ENCODE measurements at regions of chr2 and their contacts with region 1.

Region 1: GRCh38 chr2:130797493-130798435 is 39.0 kb upstream of the ARHGEF4 start:
- DNase-seq: peak; percentile 93
- H3K4me3 Mint-ChIP-seq: peak overlapping the region; percentile 57
- H3K27ac Mint-ChIP-seq: no peak overlapping the region
- H3K4me1 Mint-ChIP-seq: peaks cover 4% of the 10 kb centered on the region
- H3K27me3 Mint-ChIP-seq: peaks cover 42% of the 10 kb centered on the region

Region 2: GRCh38 chr2:130391058-130391871 is 406.5 kb before region 1 on chr2:
- CTCF ChIA-PET with region 1: no interaction called
- DNase-seq: peak; percentile 84
- H3K4me3 Mint-ChIP-seq: peak overlapping the region; percentile 82
- H3K27ac Mint-ChIP-seq: peak overlapping the region; percentile 90
- H3K4me1 Mint-ChIP-seq: peaks cover 19% of the 10 kb centered on the region
- H3K27me3 Mint-ChIP-seq: peaks cover 32% of the 10 kb centered on the region

Region 3: DNA sequence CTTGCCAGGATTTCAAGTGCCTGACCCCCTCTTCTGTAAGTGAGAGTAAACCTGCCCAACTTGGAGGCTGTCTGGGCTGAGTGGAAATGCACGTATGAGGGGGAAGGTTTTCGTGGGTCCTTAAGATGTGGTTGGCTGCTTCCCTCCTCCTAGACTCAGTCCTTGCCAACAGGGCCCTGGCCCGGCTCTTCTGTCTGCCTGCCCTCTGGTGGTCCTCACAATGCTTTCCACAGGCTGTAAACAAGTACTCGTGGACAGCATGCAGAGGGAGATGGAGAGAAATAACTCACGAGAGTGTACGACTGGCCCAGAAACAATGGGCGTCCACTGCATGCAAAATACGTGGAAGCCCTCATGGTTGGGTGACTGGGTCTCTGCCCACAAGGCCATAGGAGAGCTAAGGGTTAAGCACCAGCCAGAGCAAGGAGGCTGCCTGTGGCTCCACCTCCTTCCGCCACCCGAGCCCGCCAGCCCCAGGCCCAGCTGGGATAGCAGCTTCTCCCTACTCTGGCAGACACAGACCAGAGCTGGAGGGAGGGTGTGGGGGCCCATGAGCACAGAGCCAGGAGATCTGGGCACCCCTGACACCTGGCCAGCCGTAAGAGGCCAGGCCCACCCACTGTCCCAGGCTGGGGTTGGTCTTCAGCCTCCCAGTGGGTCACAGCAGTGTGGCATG is 22.0 kb after region 1 on chr2:
- CTCF ChIA-PET with region 1: interaction called, 12 read pairs
- DNase-seq: no peak
- H3K4me3 Mint-ChIP-seq: no peak overlapping the region
- H3K27ac Mint-ChIP-seq: no peak overlapping the region
- H3K4me1 Mint-ChIP-seq: peaks cover 17% of the 10 kb centered on the region
- H3K27me3 Mint-ChIP-seq: peaks cover 63% of the 10 kb centered on the region

Region 4: GRCh38 chr2:130873700-130874346 is 76.1 kb after region 1 on chr2:
- CTCF ChIA-PET with region 1: interaction called, 209 read pairs
- DNase-seq: peak; percentile 84
- H3K4me3 Mint-ChIP-seq: no peak overlapping the region
- H3K27ac Mint-ChIP-seq: no peak overlapping the region
- H3K4me1 Mint-ChIP-seq: no peaks in the 10 kb centered on the region
- H3K27me3 Mint-ChIP-seq: peaks cover 38% of the 10 kb centered on the region

Region 5: GRCh38 chr2:130920415-130921163 is 122.8 kb after region 1 on chr2:
- CTCF ChIA-PET with region 1: interaction called, 44 read pairs
- DNase-seq: peak; percentile 68
- H3K4me3 Mint-ChIP-seq: no peak overlapping the region
- H3K27ac Mint-ChIP-seq: no peak overlapping the region
- H3K4me1 Mint-ChIP-seq: no peaks in the 10 kb centered on the region
- H3K27me3 Mint-ChIP-seq: peaks cover 25% of the 10 kb centered on the region